ENCODE measurements at regions of chr10 and their contacts with region 1.

Region 1: DNA sequence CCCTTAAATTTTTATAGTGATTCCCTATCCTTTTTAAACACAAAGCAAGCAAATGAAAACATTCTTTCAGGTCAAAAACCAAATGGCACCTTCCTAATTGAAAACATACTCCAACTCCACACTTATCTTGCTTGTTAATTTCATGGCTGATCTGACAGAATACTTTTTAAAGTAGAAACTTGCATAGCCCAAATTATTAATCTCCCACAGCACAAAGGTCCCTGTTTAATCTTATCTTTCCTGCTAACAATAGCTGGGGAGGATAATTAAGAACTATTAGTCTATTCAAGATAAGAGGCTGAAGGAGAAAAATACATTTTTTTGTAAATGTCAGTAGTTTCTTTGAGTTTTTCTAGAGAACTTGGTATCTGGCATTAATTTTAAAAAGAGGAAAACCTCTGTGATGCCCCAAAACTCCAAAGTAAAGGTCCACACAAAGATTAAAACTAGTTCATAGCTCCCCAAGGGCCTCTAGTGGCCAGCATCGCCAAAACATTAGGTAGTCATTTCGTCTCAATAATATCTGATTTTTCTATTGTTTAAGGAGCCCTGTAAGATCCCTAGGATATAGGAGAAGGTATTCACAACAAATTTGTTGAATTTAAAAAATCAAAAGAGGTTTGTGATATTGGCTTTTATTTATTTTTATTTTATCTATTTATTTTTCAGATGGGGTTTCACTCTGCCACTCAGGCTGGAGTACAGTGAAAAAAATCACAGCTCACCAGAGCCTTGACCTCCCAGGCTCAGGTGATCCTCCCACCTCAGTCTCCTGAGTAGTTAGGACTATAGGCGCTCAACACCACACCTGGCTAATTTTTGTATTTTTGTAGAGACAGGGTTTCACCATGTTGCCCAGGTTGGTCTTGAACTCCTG is 14.7 kb downstream of the CDNF start:
- DNase-seq: peak in 1 of 2 experiments; percentile 64
- H3K4me3 ChIP-seq: no peak overlapping the region
- H3K4me3 Mint-ChIP-seq: peak overlapping the region; percentile 18
- H3K27ac Mint-ChIP-seq: peak overlapping the region; percentile 71
- H3K4me1 ChIP-seq: peaks cover 32% of the 10 kb centered on the region
- H3K4me1 Mint-ChIP-seq: peaks cover 35% of the 10 kb centered on the region
- H3K27me3 ChIP-seq: no peaks in the 10 kb centered on the region
- H3K27me3 Mint-ChIP-seq: peaks cover 6% of the 10 kb centered on the region
- CTCF ChIP-seq: peak; percentile 76 to 87

Region 2: GRCh38 chr10:14499601-14499904 is 323.6 kb before region 1 on chr10:
- CTCF ChIA-PET with region 1: no interaction called
- POLR2A ChIA-PET with region 1: interaction called, 3 read pairs
- intact Hi-C with region 1: loop called (anchors 1 kb)
- DNase-seq: no peak
- H3K4me3 ChIP-seq: no peak overlapping the region
- H3K4me3 Mint-ChIP-seq: no peak overlapping the region
- H3K27ac Mint-ChIP-seq: no peak overlapping the region
- H3K4me1 ChIP-seq: no peaks in the 10 kb centered on the region; the same call in 1 of the 2 replicates
- H3K4me1 Mint-ChIP-seq: peaks cover 15% of the 10 kb centered on the region
- H3K27me3 ChIP-seq: no peaks in the 10 kb centered on the region
- H3K27me3 Mint-ChIP-seq: no peaks in the 10 kb centered on the region
- CTCF ChIP-seq: no peak

Region 3: DNA sequence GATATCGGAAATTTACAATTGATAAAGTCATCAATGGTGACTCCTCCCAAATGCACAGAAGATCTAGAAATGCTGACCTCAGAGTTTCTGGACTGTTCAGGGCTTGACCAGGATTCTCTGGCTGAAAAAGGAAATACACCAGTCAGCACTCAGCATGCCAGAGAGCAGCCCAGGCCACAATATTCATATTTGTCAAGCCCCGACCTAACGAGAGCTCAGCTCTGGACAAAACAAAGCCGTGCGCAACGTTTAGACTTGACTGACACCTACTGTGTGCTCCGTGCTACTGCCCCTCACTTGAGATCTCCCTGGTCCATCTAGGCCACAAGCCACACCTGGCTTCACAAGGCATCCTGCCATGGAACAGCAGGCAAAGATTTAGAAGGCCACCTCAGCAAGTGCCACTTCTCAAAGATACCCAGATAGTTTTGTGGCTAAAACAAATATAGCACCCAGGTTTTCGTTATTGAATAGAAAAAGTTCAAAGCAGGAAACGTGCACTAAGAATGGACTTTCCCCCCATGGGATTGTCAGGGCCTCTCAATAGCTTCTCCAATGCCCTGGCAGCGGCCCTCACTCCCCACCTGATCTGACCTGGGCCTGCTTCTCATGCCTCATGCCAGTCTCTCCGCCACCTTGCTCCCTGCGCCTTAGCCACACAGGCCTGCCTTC is 266.7 kb before region 1 on chr10:
- CTCF ChIA-PET with region 1: interaction called, 10 read pairs
- POLR2A ChIA-PET with region 1: no interaction called
- intact Hi-C with region 1: loop called (anchors 1 kb)
- DNase-seq: peak; percentile 76 to 79
- H3K4me3 ChIP-seq: no peak overlapping the region
- H3K4me3 Mint-ChIP-seq: peak overlapping the region; percentile 5
- H3K27ac Mint-ChIP-seq: peak overlapping the region; percentile 58
- H3K4me1 ChIP-seq: peaks cover 79% of the 10 kb centered on the region
- H3K4me1 Mint-ChIP-seq: peaks cover 75% of the 10 kb centered on the region
- H3K27me3 ChIP-seq: no peaks in the 10 kb centered on the region
- H3K27me3 Mint-ChIP-seq: no peaks in the 10 kb centered on the region
- CTCF ChIP-seq: peak; percentile 47 to 81

Region 4: DNA sequence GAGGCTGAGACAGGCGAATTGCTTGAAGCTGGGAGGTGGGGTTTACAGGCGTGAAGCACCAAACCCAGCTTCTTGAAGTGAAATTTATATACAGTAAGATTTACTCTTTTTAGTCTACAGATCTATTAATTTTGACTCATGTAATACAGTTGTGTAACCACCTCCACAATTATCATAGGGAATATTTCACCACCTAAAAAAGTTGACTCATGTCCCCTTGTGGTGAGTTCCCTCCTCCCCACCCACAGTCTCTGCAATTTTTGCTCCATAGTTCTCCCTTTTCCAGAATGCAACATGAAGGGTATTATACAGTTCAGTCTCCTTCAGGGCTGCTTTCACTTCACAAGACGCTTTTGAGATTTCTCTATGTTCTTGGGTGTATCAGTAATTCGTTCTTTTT is 205.3 kb before region 1 on chr10:
- CTCF ChIA-PET with region 1: no interaction called
- POLR2A ChIA-PET with region 1: no interaction called
- intact Hi-C with region 1: loop called (anchors 5 kb)
- DNase-seq: no peak
- H3K4me3 ChIP-seq: no peak overlapping the region
- H3K4me3 Mint-ChIP-seq: no peak overlapping the region
- H3K27ac Mint-ChIP-seq: no peak overlapping the region
- H3K4me1 ChIP-seq: peaks cover 10% of the 10 kb centered on the region; the same call in 1 of the 2 replicates
- H3K4me1 Mint-ChIP-seq: peaks cover 24% of the 10 kb centered on the region
- H3K27me3 ChIP-seq: no peaks in the 10 kb centered on the region
- H3K27me3 Mint-ChIP-seq: no peaks in the 10 kb centered on the region
- CTCF ChIP-seq: peak; percentile 32

Region 5: GRCh38 chr10:14700546-14701123 is 122.5 kb before region 1 on chr10:
- CTCF ChIA-PET with region 1: interaction called, 5 read pairs
- POLR2A ChIA-PET with region 1: no interaction called
- intact Hi-C with region 1: loop called (anchors 5 kb)
- DNase-seq: no peak
- H3K4me3 ChIP-seq: no peak overlapping the region
- H3K4me3 Mint-ChIP-seq: no peak overlapping the region
- H3K27ac Mint-ChIP-seq: no peak overlapping the region
- H3K4me1 ChIP-seq: peaks cover 61% of the 10 kb centered on the region
- H3K4me1 Mint-ChIP-seq: peaks cover 54% of the 10 kb centered on the region
- H3K27me3 ChIP-seq: no peaks in the 10 kb centered on the region
- H3K27me3 Mint-ChIP-seq: no peaks in the 10 kb centered on the region
- CTCF ChIP-seq: no peak

Region 6: GRCh38 chr10:14837757-14838581 is 14.9 kb after region 1 on chr10 and contains the starts of genes CDNF, HSPA14 and MSANTD7:
- CTCF ChIA-PET with region 1: interaction called, 11 read pairs
- POLR2A ChIA-PET with region 1: interaction called, 10 read pairs
- intact Hi-C with region 1: no loop called
- DNase-seq: peak; percentile 100
- H3K4me3 ChIP-seq: peak within 1 kb of the TSS; percentile 91
- H3K4me3 Mint-ChIP-seq: peak within 1 kb of the TSS; percentile 70
- H3K27ac Mint-ChIP-seq: peak within 1 kb of the TSS; percentile 91
- H3K4me1 ChIP-seq: no peaks in the 10 kb centered on the region; the same call in 1 of the 2 replicates
- H3K4me1 Mint-ChIP-seq: peaks cover 15% of the 10 kb centered on the region
- H3K27me3 ChIP-seq: no peaks in the 10 kb centered on the region
- H3K27me3 Mint-ChIP-seq: no peaks in the 10 kb centered on the region
- CTCF ChIP-seq: no peak
- total RNA-seq, gene CDNF: 3.4 and 3.9 TPM in 2 replicates
- total RNA-seq, gene HSPA14: 36.9 and 39.3 TPM in 2 replicates
- total RNA-seq, gene MSANTD7: 30.0 and 32.8 TPM in 2 replicates